Activated CD4-positive, alpha-beta memory T cell treated with anti-CD3 and anti-CD28 coated beads for 36 hours (primary cell): ENCODE measurements at regions of chr1 and their contacts with region 1.

Region 1: GRCh38 chr1:24502709-24503058 is at the start of gene RCAN3:
- DNase-seq: peak; percentile 92
- H3K4me3 Mint-ChIP-seq: peak within 1 kb of the TSS; percentile 98
- H3K27ac Mint-ChIP-seq: peak within 1 kb of the TSS; percentile 99
- H3K4me1 Mint-ChIP-seq: peaks cover 61% of the 10 kb centered on the region
- H3K27me3 Mint-ChIP-seq: no peaks in the 10 kb centered on the region
- total RNA-seq, gene RCAN3: 71.3 to 78.8 TPM

Region 2: DNA sequence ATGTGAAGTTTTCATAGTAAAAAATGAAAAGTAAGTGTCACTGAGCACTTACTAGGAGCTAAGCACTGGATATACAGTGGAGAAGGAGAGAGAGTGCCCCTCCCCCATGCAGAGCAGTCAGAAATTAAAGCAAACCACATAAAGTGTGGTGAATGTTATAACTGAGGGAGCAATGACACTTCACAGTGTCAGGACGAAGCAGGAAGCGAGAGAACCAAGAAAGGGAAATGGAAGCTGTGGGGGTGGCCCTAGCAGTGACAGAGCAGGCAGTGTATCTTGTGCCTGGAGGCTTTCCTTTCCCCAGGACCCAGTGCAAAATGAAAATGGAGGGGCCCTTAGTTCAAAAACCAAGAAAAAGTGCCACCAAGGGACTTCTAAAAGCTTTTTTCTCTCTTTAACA is 21.6 kb before region 1 on chr1:
- CTCF ChIA-PET with region 1: interaction called, 8 read pairs
- POLR2A ChIA-PET with region 1: interaction called, 42 read pairs
- intact Hi-C with region 1: loop called (anchors 1 kb)
- DNase-seq: peak; percentile 83
- H3K4me3 Mint-ChIP-seq: peak overlapping the region; percentile 58
- H3K27ac Mint-ChIP-seq: peak overlapping the region; percentile 97
- H3K4me1 Mint-ChIP-seq: peaks cover 60% of the 10 kb centered on the region
- H3K27me3 Mint-ChIP-seq: no peaks in the 10 kb centered on the region

Region 3: DNA sequence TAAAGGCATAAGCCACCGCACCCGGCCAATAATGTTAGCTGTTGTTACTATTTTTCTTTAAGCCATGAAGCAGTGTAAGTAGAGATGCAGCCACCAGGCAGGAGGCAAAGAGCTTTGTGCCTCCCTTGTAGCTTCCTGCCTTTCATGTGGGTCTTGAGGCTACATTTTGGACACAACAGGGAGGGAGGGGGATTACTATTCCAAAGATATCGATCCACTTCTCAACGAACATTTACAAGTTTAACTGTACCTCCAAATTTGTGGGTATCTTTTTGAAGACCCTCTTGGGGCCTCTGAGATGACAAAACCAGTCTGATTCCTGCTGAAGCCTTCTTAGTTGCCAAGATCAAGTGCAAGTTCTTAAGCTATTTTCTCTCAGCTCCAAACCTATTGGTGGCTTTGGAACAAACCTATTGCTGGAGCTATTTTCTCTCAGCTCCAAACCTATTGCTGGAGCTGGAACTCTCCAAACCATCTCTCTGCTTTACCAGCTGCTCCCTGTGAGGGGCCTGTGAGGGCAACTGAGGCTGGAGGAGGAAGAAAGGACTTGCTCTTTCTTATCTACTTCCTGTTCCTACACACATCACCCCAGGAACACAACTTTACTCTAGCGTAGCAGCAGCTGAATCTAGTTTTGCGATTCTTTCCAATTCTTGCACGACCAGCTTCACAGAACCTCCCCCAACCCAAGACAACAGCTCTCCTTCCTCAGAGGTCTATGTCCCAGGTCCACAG is 16.2 kb before region 1 on chr1:
- CTCF ChIA-PET with region 1: interaction called, 9 read pairs
- POLR2A ChIA-PET with region 1: interaction called, 42 read pairs
- intact Hi-C with region 1: loop called (anchors 1 kb)
- DNase-seq: peak; percentile 47
- H3K4me3 Mint-ChIP-seq: peak overlapping the region; percentile 72
- H3K27ac Mint-ChIP-seq: peak overlapping the region; percentile 95
- H3K4me1 Mint-ChIP-seq: peaks cover 78% of the 10 kb centered on the region
- H3K27me3 Mint-ChIP-seq: no peaks in the 10 kb centered on the region

Region 4: GRCh38 chr1:24491577-24492360 is 10.9 kb before region 1 on chr1:
- CTCF ChIA-PET with region 1: interaction called, 9 read pairs
- POLR2A ChIA-PET with region 1: interaction called, 42 read pairs
- intact Hi-C with region 1: loop called (anchors 1 kb)
- DNase-seq: no peak
- H3K4me3 Mint-ChIP-seq: no peak overlapping the region
- H3K27ac Mint-ChIP-seq: no peak overlapping the region
- H3K4me1 Mint-ChIP-seq: peaks cover 30% of the 10 kb centered on the region
- H3K27me3 Mint-ChIP-seq: no peaks in the 10 kb centered on the region

Region 5: DNA sequence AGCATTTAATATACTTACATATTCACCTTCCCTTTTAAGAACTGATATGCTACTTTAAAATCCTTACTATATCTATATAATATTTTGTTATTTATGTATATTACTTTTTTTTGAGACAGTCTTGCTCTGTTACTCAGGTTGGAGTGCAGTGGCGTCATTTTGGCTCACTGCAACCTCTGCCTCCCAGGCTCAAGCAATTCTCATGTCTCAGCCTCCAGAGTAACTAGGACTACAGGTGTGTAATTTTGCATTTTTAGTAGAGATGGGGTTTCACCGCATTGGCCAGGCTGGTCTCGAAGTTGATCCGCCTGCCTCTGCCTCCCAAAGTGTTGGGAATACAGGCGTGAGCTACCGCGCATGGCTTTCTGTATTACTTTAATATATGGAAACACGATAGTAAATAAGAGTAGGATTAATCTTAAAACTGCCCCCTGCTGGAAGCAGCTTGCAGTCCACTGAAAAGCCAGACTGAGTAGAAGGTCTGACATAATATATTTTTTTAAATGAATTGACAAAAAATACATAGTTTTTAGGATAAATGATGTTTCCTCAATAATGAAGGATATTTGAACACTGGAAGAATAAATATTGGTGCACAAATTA is 24.4 kb after region 1 on chr1:
- CTCF ChIA-PET with region 1: interaction called, 62 read pairs
- POLR2A ChIA-PET with region 1: interaction called, 3 read pairs
- intact Hi-C with region 1: no loop called
- DNase-seq: peak; percentile 58
- H3K4me3 Mint-ChIP-seq: no peak overlapping the region
- H3K27ac Mint-ChIP-seq: no peak overlapping the region
- H3K4me1 Mint-ChIP-seq: peaks cover 57% of the 10 kb centered on the region
- H3K27me3 Mint-ChIP-seq: no peaks in the 10 kb centered on the region

Region 6: DNA sequence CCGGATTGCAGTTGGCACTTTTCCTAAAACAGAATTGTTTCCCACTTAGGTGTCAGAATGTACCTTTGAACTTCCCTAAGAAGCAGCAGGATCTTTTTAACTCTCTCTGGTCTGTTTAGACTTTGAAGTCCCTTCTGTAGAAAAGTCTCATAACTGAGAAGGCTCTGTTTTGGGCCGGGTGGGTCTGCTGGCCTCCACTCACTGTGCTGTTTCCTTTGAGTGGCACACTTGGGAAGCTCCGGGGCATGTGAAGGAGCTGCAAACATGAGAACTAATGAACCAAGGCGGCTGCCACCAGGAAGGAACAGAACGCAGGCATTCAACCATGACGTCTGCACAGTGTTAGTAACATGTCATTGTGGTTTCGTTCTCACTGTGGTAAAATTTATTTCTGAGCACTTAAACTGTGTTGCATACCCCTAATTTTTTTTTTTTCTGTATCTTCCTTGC is 33.7 kb after region 1 on chr1:
- CTCF ChIA-PET with region 1: interaction called, 24 read pairs
- POLR2A ChIA-PET with region 1: interaction called, 23 read pairs
- intact Hi-C with region 1: loop called (anchors 1 kb)
- DNase-seq: peak; percentile 81
- H3K4me3 Mint-ChIP-seq: peak overlapping the region; percentile 76
- H3K27ac Mint-ChIP-seq: peak overlapping the region; percentile 99
- H3K4me1 Mint-ChIP-seq: peaks cover 83% of the 10 kb centered on the region
- H3K27me3 Mint-ChIP-seq: no peaks in the 10 kb centered on the region

Region 7: DNA sequence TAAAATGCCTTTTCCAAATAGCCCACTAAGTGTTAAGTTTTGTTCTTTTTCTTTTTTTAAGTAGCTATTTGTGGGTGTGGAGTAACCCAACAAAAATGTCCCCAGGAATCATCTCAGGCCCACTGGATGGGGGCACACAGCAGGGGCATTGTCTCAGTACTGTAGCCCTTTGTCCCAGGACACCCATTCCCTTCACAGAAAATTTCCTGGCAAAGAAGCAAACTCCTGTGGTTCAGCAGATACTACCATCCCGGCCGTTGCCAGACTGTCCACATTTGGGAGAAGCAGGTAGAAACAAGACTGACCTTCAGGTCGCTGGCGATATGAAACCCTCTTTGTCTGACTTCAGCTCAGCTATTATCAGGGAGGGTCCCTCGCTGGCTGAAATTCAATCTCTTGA is 116.7 kb after region 1 on chr1:
- CTCF ChIA-PET with region 1: no interaction called
- POLR2A ChIA-PET with region 1: no interaction called
- intact Hi-C with region 1: no loop called
- DNase-seq: no peak
- H3K4me3 Mint-ChIP-seq: no peak overlapping the region
- H3K27ac Mint-ChIP-seq: no peak overlapping the region
- H3K4me1 Mint-ChIP-seq: no peaks in the 10 kb centered on the region
- H3K27me3 Mint-ChIP-seq: no peaks in the 10 kb centered on the region